Posterior vena cava (tissue), 2 donors: ENCODE measurements at regions of chrX and their contacts with region 1.

Region 1: GRCh38 chrX:113699939-113700338 is 859.3 kb upstream of the AMOT start:
- DNase-seq: no peak

Region 2: GRCh38 chrX:115029869-115030570 is 1330.1 kb after region 1 on chrX:
- intact Hi-C with region 1: loop called in 1 of 2 experiments (anchors 5 kb)
- DNase-seq: no peak